Testis (tissue), 5 donors: ENCODE measurements at regions of chr12 and their contacts with region 1.

Region 1: GRCh38 chr12:53213348-53213747 is 6.3 kb upstream of the ITGB7 start:
- DNase-seq: peak; percentile 89
- H3K4me3 ChIP-seq: no peak overlapping the region
- H3K27ac ChIP-seq: no peak overlapping the region
- H3K4me1 ChIP-seq: peaks cover 12% of the 10 kb centered on the region
- H3K27me3 ChIP-seq: no peaks in the 10 kb centered on the region
- CTCF ChIP-seq: peak; percentile 81 to 90 (median 84)
- POLR2A ChIP-seq: no peak

Region 2: DNA sequence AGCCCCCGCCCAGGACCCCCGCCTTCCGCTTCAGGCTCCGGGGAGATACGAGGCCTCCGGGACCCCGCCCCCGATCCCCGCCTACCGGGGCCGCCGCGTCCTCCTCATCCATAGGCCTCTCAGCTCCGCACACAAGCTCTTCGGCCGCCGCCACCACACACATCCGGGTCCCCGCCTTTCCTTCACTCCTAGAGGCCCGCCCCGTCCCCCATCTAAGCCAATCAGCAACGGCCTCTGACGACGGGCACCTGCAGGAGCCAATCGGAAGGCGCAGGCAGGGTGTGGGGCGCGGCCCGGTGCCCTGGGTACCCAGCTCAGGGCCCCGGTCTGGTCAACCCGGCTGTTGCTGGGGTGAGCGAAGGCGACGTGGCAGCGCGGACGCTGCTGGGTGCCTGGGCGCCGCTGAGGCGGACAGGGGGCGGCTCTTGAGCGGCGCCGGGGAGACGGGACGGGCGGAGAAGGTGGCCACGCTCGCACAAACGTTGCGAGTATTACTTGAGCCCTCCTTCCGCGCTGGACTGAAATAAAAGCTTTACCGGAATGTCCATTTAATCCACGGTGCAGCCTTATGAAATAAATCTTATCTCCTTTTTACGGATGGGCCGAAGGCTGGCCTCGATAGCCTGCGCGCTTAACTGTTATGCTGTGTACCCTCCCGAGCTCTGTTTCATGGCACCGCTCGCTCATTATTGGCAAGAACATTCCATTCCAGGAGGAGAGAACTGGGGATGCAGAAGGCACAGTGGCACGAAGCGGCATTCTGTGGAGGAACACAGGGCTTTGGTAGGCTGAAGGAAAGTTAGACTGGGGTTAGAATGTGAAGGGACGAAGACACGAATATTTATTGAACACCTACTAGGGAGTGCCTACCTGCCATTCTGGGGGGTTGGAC is 133.9 kb before region 1 on chr12 and contains the start of gene SPRYD3:
- intact Hi-C with region 1: no loop called
- DNase-seq: peak; percentile 98
- H3K4me3 ChIP-seq: peak within 1 kb of the TSS; percentile 59 to 82
- H3K27ac ChIP-seq: peak within 1 kb of the TSS; percentile 91
- H3K4me1 ChIP-seq: peaks cover 8% of the 10 kb centered on the region
- H3K27me3 ChIP-seq: no peaks in the 10 kb centered on the region
- CTCF ChIP-seq: peak in 1 of 3 experiments; percentile 2
- POLR2A ChIP-seq: peak; percentile 47
- total RNA-seq, gene SPRYD3: 27.7 to 29.5 TPM

Region 3: DNA sequence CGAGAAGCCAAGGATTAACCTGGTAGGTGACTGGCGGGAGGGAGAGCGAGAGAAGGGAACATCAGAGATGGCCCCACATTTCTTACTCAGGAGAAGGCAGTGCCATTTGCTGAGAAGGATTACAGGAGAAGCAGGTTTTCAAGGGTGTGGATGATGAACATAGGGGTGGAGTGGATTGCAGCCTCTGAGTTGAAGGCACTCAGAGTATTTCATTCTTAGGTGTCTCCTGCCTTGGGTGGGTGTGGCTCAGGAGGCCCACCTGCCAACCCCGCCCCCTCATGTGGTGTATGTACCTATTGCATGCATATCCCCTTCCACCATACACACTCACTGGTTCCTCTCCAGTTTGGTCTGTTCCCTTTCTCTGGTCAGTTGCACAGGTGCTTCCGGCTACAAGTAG is 61.1 kb after region 1 on chr12:
- intact Hi-C with region 1: loop called (anchors 10 kb)
- DNase-seq: no peak
- H3K4me3 ChIP-seq: no peak overlapping the region
- H3K27ac ChIP-seq: no peak overlapping the region
- H3K4me1 ChIP-seq: no peaks in the 10 kb centered on the region
- H3K27me3 ChIP-seq: no peaks in the 10 kb centered on the region
- CTCF ChIP-seq: no peak
- POLR2A ChIP-seq: no peak